CD4-positive, alpha-beta T cell (primary cell): ENCODE measurements at regions of chr14 and their contacts with region 1.

Region 1: GRCh38 chr14:54773171-54773975 is 129.3 kb downstream of the GCH1 start:
- DNase-seq: peak; percentile 15 to 89 (median 44)
- ATAC-seq: peak; percentile 81
- H3K4me3 ChIP-seq: peak overlapping the region; percentile 28
- H3K4me3 Mint-ChIP-seq: peak overlapping the region; percentile 16
- H3K27ac ChIP-seq: peak overlapping the region in 1 of 2 donors; percentile 37
- H3K27ac Mint-ChIP-seq: peak overlapping the region; percentile 25
- H3K4me1 ChIP-seq: peaks cover 24% of the 10 kb centered on the region
- H3K4me1 Mint-ChIP-seq: peaks cover 14% of the 10 kb centered on the region
- H3K27me3 ChIP-seq: no peaks in the 10 kb centered on the region
- H3K27me3 Mint-ChIP-seq: no peaks in the 10 kb centered on the region
- CTCF ChIP-seq: peak; percentile 8

Region 2: DNA sequence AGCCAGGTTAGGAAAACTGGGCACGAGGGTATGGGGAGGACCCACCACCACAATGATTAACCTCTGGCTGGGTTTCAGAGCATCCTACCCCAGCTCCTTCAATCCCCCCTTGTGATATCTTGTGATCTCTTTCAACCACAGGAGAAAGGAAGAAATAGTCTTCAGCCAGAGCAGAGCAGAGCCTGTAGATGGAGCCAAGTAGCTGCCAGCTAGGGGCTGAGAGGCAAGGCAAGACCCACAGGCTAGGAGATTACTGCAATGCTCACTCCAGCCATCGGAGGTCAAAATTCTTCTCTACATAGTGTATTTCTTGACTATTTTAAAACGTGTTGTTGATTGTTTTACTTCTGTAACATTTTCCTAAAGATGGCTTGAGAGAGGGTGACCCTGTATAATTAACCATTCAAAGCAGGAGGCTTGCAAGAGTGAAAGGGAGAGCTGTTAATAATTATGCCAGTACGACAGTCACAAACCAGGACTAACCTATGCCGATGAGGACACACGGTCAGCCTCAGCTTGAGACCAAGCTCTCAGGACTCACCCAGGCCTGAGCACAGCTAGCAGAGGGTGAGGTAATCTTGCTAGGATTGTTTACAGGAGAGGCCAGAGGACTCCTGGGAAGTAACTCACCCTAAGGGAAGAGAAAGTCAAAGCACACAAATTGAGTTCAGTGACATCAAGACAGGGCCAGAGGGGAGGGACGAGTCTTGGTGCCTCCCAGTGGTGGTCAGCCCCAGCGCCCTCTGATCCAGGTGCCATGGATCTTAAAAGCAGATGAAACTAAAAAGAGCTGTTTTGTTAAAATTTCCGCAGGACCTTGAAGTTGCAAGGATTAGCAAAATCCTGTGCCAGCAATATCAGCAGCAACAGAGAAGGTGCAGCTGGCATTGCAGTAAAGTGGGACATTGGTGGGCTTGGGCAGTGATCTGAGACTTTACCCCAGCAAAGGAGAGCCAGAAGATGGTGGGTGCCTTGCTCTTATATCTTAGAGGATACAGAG is 406.3 kb before region 1 on chr14:
- CTCF ChIA-PET with region 1: no interaction called
- POLR2A ChIA-PET with region 1: no interaction called
- intact Hi-C with region 1: loop called in 1 of 2 experiments (anchors 5 kb)
- DNase-seq: peak in 10 of 14 experiments; percentile 6 to 59 (median 20)
- ATAC-seq: peak; percentile 82
- H3K4me3 ChIP-seq: no peak overlapping the region
- H3K4me3 Mint-ChIP-seq: no peak overlapping the region
- H3K27ac ChIP-seq: no peak overlapping the region
- H3K27ac Mint-ChIP-seq: no peak overlapping the region
- H3K4me1 ChIP-seq: no peaks in the 10 kb centered on the region
- H3K4me1 Mint-ChIP-seq: no peaks in the 10 kb centered on the region
- H3K27me3 ChIP-seq: peaks cover 0 to 8% of the 10 kb centered on the region in 2 experiments
- H3K27me3 Mint-ChIP-seq: peaks cover 25% of the 10 kb centered on the region
- CTCF ChIP-seq: peak; percentile 46

Region 3: GRCh38 chr14:54786838-54787237 is 13.5 kb after region 1 on chr14:
- CTCF ChIA-PET with region 1: interaction called, 19 read pairs
- POLR2A ChIA-PET with region 1: no interaction called
- intact Hi-C with region 1: no loop called
- DNase-seq: no peak
- ATAC-seq: no peak
- H3K4me3 ChIP-seq: no peak overlapping the region
- H3K4me3 Mint-ChIP-seq: no peak overlapping the region
- H3K27ac ChIP-seq: no peak overlapping the region
- H3K27ac Mint-ChIP-seq: no peak overlapping the region
- H3K4me1 ChIP-seq: no peaks in the 10 kb centered on the region
- H3K4me1 Mint-ChIP-seq: no peaks in the 10 kb centered on the region
- H3K27me3 ChIP-seq: no peaks in the 10 kb centered on the region
- H3K27me3 Mint-ChIP-seq: no peaks in the 10 kb centered on the region
- CTCF ChIP-seq: no peak

Region 4: DNA sequence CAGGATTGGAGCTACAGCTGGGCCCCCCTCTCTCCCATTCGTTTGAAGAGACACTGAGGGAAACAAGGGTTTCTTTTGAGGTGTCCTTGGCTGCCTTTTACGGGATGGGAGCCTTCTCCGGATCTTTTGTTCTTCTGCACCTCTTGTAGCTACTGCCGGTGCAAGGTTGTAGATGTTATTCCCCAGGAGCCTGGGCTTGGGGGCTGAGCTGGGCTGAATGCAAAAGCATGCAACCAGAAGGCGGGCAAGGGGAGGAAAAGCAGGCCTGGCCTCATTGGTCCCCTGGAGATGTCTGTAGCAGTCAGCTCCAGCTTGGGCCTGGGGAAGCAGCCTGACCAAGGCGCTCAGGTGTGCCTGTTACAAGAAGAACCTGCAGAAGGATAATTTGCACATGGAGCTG is 18.9 kb after region 1 on chr14:
- CTCF ChIA-PET with region 1: interaction called, 10 read pairs
- POLR2A ChIA-PET with region 1: no interaction called
- intact Hi-C with region 1: no loop called
- DNase-seq: no peak
- ATAC-seq: no peak
- H3K4me3 ChIP-seq: no peak overlapping the region
- H3K4me3 Mint-ChIP-seq: no peak overlapping the region
- H3K27ac ChIP-seq: no peak overlapping the region
- H3K27ac Mint-ChIP-seq: no peak overlapping the region
- H3K4me1 ChIP-seq: no peaks in the 10 kb centered on the region
- H3K4me1 Mint-ChIP-seq: no peaks in the 10 kb centered on the region
- H3K27me3 ChIP-seq: no peaks in the 10 kb centered on the region
- H3K27me3 Mint-ChIP-seq: peaks cover 10% of the 10 kb centered on the region
- CTCF ChIP-seq: no peak

Region 5: DNA sequence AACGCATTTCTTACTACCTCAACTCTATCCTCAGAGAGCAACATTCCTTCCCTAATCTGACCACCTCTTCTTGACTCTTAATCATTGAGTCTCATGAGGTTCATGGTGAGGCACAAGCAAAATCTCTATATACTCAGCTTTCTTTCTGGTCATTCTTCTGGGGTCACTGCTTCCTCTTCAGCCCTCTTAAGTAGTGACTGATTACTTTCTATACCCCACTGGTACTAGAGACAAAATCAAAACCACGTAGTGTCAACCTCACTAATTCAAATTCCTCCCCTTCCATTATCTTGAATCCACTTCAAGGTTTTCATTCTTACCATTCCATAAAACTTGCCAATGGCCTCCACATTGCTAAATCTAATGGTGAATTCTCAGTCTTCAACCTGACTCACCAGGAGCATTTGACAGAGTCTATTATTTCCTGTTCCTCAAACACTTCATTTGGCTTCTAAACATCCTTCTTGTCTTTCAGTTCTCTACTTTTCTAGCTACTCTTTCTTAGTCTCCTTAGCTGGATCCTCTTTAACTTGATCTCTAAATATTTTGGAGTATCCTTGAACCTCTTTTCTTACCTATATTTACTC is 246.7 kb after region 1 on chr14:
- CTCF ChIA-PET with region 1: no interaction called
- POLR2A ChIA-PET with region 1: no interaction called
- intact Hi-C with region 1: no loop called
- DNase-seq: no peak
- ATAC-seq: no peak
- H3K4me3 ChIP-seq: no peak overlapping the region
- H3K4me3 Mint-ChIP-seq: no peak overlapping the region
- H3K27ac ChIP-seq: no peak overlapping the region
- H3K27ac Mint-ChIP-seq: no peak overlapping the region
- H3K4me1 ChIP-seq: no peaks in the 10 kb centered on the region
- H3K4me1 Mint-ChIP-seq: peaks cover 7% of the 10 kb centered on the region
- H3K27me3 ChIP-seq: no peaks in the 10 kb centered on the region
- H3K27me3 Mint-ChIP-seq: no peaks in the 10 kb centered on the region
- CTCF ChIP-seq: no peak